B cell (primary cell): ENCODE measurements at regions of chr2 and their contacts with region 1.

Region 1: GRCh38 chr2:196101325-196101991 is 32.8 kb upstream of the DNAH7 start:
- DNase-seq: peak; percentile 67
- ATAC-seq: peak; percentile 86
- H3K4me3 ChIP-seq: no peak overlapping the region
- H3K4me3 Mint-ChIP-seq: peak overlapping the region; percentile 64
- H3K27ac ChIP-seq: peak overlapping the region; percentile 49 to 66
- H3K27ac Mint-ChIP-seq: peak overlapping the region; percentile 79
- H3K4me1 ChIP-seq: peaks cover 48 to 49% of the 10 kb centered on the region in 2 donors
- H3K4me1 Mint-ChIP-seq: peaks cover 68% of the 10 kb centered on the region
- H3K27me3 ChIP-seq: no peaks in the 10 kb centered on the region
- H3K27me3 Mint-ChIP-seq: no peaks in the 10 kb centered on the region
- CTCF ChIP-seq: no peak

Region 2: DNA sequence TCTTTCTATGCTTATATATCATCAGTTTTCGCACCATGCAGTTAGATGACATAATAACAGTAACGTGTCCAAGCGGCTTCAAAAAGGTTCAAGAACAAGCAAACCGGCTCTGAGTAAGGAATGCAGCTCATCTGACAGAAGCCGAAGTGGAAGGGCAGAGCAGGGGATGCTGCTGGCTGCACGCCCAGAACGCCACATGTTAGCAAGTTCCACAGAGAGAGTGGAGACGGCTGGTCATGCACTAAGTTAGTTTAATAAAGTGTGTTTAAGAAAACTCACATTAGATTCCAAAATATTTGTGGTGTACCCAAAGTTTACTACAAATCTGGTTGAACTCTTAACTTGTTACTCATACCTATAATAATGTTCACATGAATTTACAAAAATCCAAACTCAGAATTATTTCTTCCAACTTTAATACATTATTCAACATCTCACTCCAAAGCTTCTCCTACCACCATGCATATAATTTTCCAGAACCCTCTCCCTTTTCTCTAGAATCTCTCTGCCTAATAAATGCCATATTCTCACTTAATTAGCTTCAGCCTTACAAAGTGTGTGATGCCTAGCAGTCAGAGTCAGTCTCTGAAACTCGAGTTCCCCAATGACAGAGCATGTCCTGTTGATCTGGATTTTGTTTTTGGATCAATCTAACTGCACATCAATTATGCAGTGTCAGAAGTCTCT is 202.8 kb before region 1 on chr2:
- CTCF ChIA-PET with region 1: no interaction called
- POLR2A ChIA-PET with region 1: no interaction called
- intact Hi-C with region 1: no loop called
- DNase-seq: no peak
- ATAC-seq: no peak
- H3K4me3 ChIP-seq: no peak overlapping the region
- H3K4me3 Mint-ChIP-seq: no peak overlapping the region
- H3K27ac ChIP-seq: no peak overlapping the region
- H3K27ac Mint-ChIP-seq: no peak overlapping the region
- H3K4me1 ChIP-seq: no peaks in the 10 kb centered on the region
- H3K4me1 Mint-ChIP-seq: no peaks in the 10 kb centered on the region
- H3K27me3 ChIP-seq: no peaks in the 10 kb centered on the region
- H3K27me3 Mint-ChIP-seq: peaks cover 6% of the 10 kb centered on the region
- CTCF ChIP-seq: no peak

Region 3: DNA sequence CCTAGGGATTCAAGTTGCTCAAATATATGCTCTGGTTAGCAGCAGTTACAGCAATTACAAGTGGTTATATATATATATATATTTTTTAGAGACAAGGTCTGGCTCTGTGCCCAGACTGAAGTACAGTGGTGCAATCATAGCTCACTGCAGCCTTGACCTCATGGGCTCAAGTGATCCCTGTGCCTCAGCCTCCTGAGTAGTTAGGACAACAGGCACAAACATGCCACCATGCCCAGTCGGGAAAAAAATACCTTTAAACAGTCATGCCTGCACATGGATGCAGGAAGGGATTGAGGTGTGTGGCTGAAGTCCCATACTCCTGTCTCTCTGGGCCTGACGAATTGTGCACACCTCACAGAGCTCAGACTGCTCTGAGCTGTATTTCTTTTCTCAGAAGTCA is 13.3 kb before region 1 on chr2:
- CTCF ChIA-PET with region 1: no interaction called
- POLR2A ChIA-PET with region 1: no interaction called
- intact Hi-C with region 1: no loop called
- DNase-seq: no peak
- ATAC-seq: no peak
- H3K4me3 ChIP-seq: no peak overlapping the region
- H3K4me3 Mint-ChIP-seq: no peak overlapping the region
- H3K27ac ChIP-seq: no peak overlapping the region
- H3K27ac Mint-ChIP-seq: no peak overlapping the region
- H3K4me1 ChIP-seq: peaks cover 0 to 2% of the 10 kb centered on the region in 2 donors
- H3K4me1 Mint-ChIP-seq: peaks cover 7% of the 10 kb centered on the region
- H3K27me3 ChIP-seq: no peaks in the 10 kb centered on the region
- H3K27me3 Mint-ChIP-seq: no peaks in the 10 kb centered on the region
- CTCF ChIP-seq: no peak

Region 4: GRCh38 chr2:196143730-196144131 is 42.3 kb after region 1 on chr2:
- CTCF ChIA-PET with region 1: no interaction called
- POLR2A ChIA-PET with region 1: interaction called, 11 read pairs
- intact Hi-C with region 1: loop called (anchors 5 kb)
- DNase-seq: no peak
- ATAC-seq: no peak
- H3K4me3 ChIP-seq: no peak overlapping the region
- H3K4me3 Mint-ChIP-seq: no peak overlapping the region
- H3K27ac ChIP-seq: peak overlapping the region in 1 of 2 donors; percentile 58
- H3K27ac Mint-ChIP-seq: peak overlapping the region; percentile 57
- H3K4me1 ChIP-seq: peaks cover 20 to 28% of the 10 kb centered on the region in 2 donors
- H3K4me1 Mint-ChIP-seq: peaks cover 39% of the 10 kb centered on the region
- H3K27me3 ChIP-seq: no peaks in the 10 kb centered on the region
- H3K27me3 Mint-ChIP-seq: no peaks in the 10 kb centered on the region
- CTCF ChIP-seq: no peak

Region 5: DNA sequence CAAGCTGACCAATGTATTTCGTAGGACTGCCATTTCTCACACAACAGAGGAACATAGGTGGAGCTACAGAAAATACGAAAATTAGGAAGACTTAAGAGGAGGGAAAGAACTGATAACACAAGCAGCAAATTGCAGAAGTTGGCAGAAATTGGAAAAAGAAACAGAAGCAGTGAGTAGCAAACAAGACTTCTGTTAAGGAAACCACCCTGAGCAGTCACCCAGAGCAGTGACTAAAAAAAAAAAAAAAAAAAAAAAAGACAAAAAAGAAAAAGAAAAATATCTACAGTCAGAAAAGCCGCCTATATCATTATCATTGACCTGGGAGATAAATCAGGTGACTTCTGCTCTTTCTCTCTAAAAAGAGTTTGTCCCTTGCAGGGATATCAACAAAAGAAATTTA is 48.5 kb after region 1 on chr2:
- CTCF ChIA-PET with region 1: no interaction called
- POLR2A ChIA-PET with region 1: no interaction called
- intact Hi-C with region 1: loop called (anchors 5 kb)
- DNase-seq: peak; percentile 83
- ATAC-seq: peak; percentile 80
- H3K4me3 ChIP-seq: peak overlapping the region in 2 of 5 experiments; percentile 11 to 52
- H3K4me3 Mint-ChIP-seq: peak overlapping the region; percentile 86
- H3K27ac ChIP-seq: peak overlapping the region; percentile 71 to 90
- H3K27ac Mint-ChIP-seq: peak overlapping the region; percentile 97
- H3K4me1 ChIP-seq: peaks cover 37 to 55% of the 10 kb centered on the region in 2 donors
- H3K4me1 Mint-ChIP-seq: peaks cover 65% of the 10 kb centered on the region
- H3K27me3 ChIP-seq: no peaks in the 10 kb centered on the region
- H3K27me3 Mint-ChIP-seq: no peaks in the 10 kb centered on the region
- CTCF ChIP-seq: no peak

Region 6: GRCh38 chr2:196268538-196269338 is 167.3 kb after region 1 on chr2:
- CTCF ChIA-PET with region 1: no interaction called
- POLR2A ChIA-PET with region 1: interaction called, 12 read pairs
- intact Hi-C with region 1: no loop called
- DNase-seq: peak; percentile 78
- ATAC-seq: peak; percentile 68
- H3K4me3 ChIP-seq: peak overlapping the region in 4 of 5 experiments; percentile 19 to 59 (median 31)
- H3K4me3 Mint-ChIP-seq: peak overlapping the region; percentile 75
- H3K27ac ChIP-seq: peak overlapping the region; percentile 74 to 90
- H3K27ac Mint-ChIP-seq: peak overlapping the region; percentile 95
- H3K4me1 ChIP-seq: peaks cover 35 to 57% of the 10 kb centered on the region in 2 donors
- H3K4me1 Mint-ChIP-seq: peaks cover 51% of the 10 kb centered on the region
- H3K27me3 ChIP-seq: no peaks in the 10 kb centered on the region
- H3K27me3 Mint-ChIP-seq: no peaks in the 10 kb centered on the region
- CTCF ChIP-seq: no peak

Region 7: GRCh38 chr2:196337208-196337953 is 235.9 kb after region 1 on chr2:
- CTCF ChIA-PET with region 1: interaction called, 10 read pairs
- POLR2A ChIA-PET with region 1: no interaction called
- intact Hi-C with region 1: no loop called
- DNase-seq: peak; percentile 58
- ATAC-seq: peak; percentile 51
- H3K4me3 ChIP-seq: no peak overlapping the region
- H3K4me3 Mint-ChIP-seq: no peak overlapping the region
- H3K27ac ChIP-seq: peak overlapping the region in 1 of 2 donors; percentile 52
- H3K27ac Mint-ChIP-seq: peak overlapping the region; percentile 43
- H3K4me1 ChIP-seq: peaks cover 10 to 11% of the 10 kb centered on the region in 2 donors
- H3K4me1 Mint-ChIP-seq: peaks cover 19% of the 10 kb centered on the region
- H3K27me3 ChIP-seq: no peaks in the 10 kb centered on the region
- H3K27me3 Mint-ChIP-seq: no peaks in the 10 kb centered on the region
- CTCF ChIP-seq: peak; percentile 66